ENCODE measurements at regions of chr9 and their contacts with region 1.

Region 1: DNA sequence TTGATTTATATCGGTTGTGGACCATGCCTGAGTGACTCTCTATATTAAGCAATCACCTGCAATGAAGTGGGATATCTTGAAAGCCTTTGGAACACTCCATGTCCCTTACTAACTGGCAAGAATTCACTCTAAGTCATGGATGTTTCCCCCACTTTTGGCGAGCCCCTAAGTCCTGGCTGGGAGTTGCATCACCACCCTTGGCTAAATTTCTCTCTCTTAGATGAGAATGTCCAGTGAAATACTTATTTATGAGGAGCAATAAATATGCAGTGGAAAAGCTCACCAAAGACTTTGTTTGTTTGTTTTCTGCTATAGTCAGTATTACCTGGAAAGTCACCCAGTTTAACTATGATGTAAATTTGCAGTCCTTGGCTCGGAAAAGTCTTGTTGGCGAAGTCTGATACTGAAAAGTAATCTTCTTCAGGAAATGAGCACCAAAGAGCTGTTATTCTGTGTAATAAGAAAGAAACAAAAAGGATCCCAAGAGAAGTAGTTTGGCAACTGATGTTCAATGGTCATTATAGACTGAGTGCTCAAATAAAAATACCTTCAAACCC is 333.8 kb downstream of the DMRT2 start:
- DNase-seq: no peak
- ATAC-seq: no peak
- H3K4me3 Mint-ChIP-seq: no peak overlapping the region
- H3K27ac Mint-ChIP-seq: no peak overlapping the region
- H3K4me1 Mint-ChIP-seq: no peaks in the 10 kb centered on the region
- H3K27me3 Mint-ChIP-seq: no peaks in the 10 kb centered on the region

Region 2: DNA sequence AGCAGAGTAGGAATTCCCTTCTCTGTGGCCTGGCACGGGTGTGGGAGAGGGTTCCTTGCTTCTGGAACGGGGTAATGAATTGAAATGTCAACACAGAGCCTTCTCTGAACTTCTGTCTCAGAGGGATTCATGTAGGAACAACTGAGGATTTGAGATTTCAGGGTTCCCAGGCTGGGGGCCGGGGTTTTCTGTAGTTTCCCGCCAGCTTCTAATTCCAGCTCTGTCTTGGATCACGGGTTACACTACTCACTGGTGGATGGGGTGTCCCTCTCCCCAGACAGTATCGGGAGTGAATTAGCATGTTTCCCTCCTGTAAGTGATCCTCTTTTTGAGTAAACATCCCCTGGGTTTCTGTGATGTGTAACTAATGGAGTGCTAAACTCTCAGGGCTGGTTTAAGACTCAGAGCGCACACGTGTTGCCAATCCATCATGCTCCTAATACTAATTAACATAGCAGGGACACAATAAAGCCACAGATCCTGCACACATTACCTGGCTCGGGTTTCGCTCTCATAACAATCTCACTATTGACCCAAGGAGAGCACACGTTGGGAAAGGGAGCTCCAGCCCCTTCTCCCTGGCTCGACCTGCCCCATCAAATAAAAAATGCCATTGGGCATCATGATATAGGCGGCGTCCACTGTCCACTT is 351.9 kb before region 1 on chr9:
- CTCF ChIA-PET with region 1: no interaction called
- POLR2A ChIA-PET with region 1: no interaction called
- intact Hi-C with region 1: no loop called
- DNase-seq: no peak
- ATAC-seq: no peak
- H3K4me3 Mint-ChIP-seq: no peak overlapping the region
- H3K27ac Mint-ChIP-seq: no peak overlapping the region
- H3K4me1 Mint-ChIP-seq: no peaks in the 10 kb centered on the region
- H3K27me3 Mint-ChIP-seq: peaks cover 16% of the 10 kb centered on the region

Region 3: GRCh38 chr9:1236061-1236460 is 147.9 kb before region 1 on chr9:
- CTCF ChIA-PET with region 1: no interaction called
- POLR2A ChIA-PET with region 1: no interaction called
- intact Hi-C with region 1: loop called in 1 of 2 experiments (anchors 5 kb)
- DNase-seq: no peak
- ATAC-seq: no peak
- H3K4me3 Mint-ChIP-seq: no peak overlapping the region
- H3K27ac Mint-ChIP-seq: no peak overlapping the region
- H3K4me1 Mint-ChIP-seq: no peaks in the 10 kb centered on the region
- H3K27me3 Mint-ChIP-seq: peaks cover 3% of the 10 kb centered on the region

Region 4: DNA sequence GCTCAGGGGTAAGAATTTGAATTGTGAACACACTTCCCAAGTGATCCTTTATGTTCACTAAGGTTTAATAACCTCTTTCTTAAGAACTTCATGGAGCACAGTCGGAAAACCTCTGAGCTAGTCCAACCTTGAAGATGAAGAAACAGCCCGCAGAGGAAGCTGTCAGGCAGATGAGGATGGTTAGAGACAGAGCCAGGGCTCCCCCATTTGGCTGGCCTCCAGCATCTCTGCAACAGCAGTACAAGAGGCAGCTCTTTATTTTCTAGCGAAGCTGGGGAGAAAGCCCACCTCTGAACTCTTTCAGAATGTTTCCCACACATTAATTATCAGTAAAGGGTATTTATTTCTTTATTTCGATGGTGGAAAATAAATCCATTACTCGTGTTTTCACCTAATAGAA is 17.0 kb after region 1 on chr9:
- CTCF ChIA-PET with region 1: no interaction called
- POLR2A ChIA-PET with region 1: no interaction called
- intact Hi-C with region 1: no loop called
- DNase-seq: no peak
- ATAC-seq: no peak
- H3K4me3 Mint-ChIP-seq: no peak overlapping the region
- H3K27ac Mint-ChIP-seq: no peak overlapping the region
- H3K4me1 Mint-ChIP-seq: no peaks in the 10 kb centered on the region
- H3K27me3 Mint-ChIP-seq: no peaks in the 10 kb centered on the region